Lower leg skin (tissue), 4 donors: ENCODE measurements at regions of chr9 and their contacts with region 1.

Region 1: DNA sequence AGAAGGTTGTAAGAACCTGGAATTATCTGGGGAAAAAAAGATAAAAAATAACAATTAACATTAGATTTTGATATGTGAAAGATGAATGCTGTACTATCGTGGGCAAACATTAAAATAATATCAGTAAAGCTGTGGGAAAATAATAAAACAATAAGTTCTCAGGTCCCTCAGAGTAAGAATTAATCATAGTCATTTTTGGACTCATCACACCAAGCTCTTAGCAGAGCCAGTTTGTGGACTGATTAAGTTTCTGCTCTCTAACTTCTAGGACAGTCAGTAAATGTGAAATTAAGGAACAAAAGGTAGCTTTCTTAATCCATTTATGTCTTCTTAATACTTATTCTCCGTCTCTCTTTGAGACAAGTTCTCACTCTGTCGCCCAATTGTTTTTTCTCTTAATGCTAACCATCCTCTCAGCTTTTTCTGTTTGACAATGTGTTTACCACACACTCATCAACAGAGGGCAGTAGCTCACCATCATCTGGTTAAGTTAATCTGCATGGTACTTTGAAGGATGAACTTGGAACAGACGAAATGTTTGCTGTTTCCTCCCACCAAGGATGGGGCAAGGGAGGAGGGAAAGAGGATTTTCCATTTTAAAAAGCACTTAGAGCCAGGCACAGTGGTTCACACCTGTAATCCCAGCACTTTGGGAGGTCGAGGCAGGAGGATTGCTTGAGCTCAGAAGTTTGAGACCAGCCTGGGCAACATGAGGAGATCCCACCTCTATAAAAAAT is 5.3 kb upstream of the ACO1 start:
- DNase-seq: peak in 1 of 2 donors; percentile 33
- H3K4me3 ChIP-seq: no peak overlapping the region
- CTCF ChIP-seq: peak in 1 of 3 donors; percentile 63
- POLR2A ChIP-seq: no peak

Region 2: GRCh38 chr9:31753756-31754155 is 625.4 kb before region 1 on chr9:
- intact Hi-C with region 1: no loop called
- DNase-seq: no peak
- H3K4me3 ChIP-seq: no peak overlapping the region
- CTCF ChIP-seq: no peak
- POLR2A ChIP-seq: no peak

Region 3: GRCh38 chr9:32161720-32162119 is 217.4 kb before region 1 on chr9:
- intact Hi-C with region 1: no loop called
- DNase-seq: no peak
- H3K4me3 ChIP-seq: no peak overlapping the region
- CTCF ChIP-seq: no peak
- POLR2A ChIP-seq: no peak

Region 4: GRCh38 chr9:32579706-32580331 is 200.7 kb after region 1 on chr9:
- intact Hi-C with region 1: loop called (anchors 5 kb)
- DNase-seq: peak; percentile 51 to 94
- H3K4me3 ChIP-seq: no peak overlapping the region
- CTCF ChIP-seq: peak in 1 of 3 donors; percentile 67
- POLR2A ChIP-seq: no peak